ENCODE measurements at regions of chr14 and their contacts with region 1.

Region 1: DNA sequence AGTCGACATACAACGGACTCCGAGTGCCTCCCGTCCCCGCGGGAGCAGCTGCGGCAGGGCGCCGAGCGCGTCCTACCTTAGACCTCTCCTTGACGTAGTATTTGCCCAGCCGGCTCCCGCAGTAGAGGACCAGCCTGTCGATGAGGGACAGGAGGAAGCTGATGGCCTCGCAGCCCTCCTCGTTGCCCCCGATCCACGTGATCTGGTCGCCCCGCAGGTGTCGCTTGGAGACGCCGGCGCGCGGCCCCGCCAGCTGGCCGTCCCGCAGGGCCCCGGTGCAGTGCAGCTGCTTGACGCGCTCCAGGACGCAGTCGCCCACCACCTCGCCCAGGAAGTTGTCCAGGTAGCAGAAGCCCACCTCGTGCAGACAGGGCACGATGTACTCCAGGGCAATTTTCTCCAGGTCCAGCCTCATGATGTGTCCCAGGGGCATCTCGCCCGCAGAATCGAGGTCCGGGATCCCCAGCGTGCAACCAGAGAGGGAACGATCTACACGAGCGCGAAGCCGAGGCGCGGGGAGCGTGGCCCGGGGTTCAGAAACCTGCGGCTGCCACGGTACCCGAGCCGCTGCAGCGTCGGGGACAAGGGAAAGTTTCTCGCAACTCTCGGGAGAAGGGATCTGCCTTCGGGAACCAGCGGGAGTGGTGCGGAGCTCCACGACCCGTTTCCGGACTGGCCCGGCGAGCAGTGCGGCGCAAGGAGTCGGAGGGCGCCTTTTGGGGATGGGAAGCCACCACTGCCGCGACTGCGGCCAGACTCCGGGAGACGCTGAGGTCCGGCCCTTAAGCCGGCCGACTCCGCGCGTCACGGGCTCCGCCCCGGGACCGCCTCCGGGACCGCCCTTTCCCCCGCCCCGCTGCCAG is at the start of gene EGLN3:
- DNase-seq: peak; percentile 84 to 98 (median 95)

Region 2: GRCh38 chr14:33754265-33754664 is 196.3 kb before region 1 on chr14:
- intact Hi-C with region 1: no loop called
- DNase-seq: no peak

Region 3: DNA sequence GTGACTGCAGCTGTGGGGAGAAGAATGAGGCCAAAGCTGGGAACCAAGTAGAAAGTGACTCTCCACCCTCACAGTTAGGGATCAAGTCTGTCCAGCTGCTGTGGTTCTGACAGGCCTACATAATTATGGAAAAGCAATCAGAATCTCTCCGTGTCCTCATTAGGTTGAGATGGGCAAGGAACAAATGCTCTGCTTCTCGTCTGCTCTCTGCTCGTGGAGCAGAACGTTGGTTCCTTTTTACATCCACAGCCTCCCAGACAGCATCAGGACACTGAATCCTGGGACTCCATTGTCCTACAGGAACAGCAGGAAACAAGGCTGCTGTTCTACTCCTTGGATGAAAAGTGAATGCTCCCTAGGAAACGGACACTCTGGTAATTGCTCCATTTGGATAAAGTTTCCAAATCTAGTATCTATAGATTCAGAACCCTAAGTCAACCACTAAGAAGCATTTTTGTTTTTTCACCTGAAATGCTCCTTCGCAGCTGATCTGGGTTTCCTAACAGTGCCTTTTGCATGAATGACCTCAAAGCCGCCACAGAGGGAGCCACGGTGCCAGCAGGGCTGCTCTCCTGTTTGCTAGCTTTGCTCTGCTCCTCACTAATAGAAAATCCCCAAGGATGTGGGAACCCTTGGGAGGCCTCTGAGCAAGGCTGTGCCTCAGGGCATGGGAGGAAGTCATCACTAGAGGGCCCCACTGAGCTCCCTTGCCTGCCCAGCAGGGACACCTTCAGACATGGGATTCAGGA is 101.7 kb before region 1 on chr14:
- intact Hi-C with region 1: loop called (anchors 5 kb)
- DNase-seq: peak; percentile 46 to 91 (median 80)

Region 4: DNA sequence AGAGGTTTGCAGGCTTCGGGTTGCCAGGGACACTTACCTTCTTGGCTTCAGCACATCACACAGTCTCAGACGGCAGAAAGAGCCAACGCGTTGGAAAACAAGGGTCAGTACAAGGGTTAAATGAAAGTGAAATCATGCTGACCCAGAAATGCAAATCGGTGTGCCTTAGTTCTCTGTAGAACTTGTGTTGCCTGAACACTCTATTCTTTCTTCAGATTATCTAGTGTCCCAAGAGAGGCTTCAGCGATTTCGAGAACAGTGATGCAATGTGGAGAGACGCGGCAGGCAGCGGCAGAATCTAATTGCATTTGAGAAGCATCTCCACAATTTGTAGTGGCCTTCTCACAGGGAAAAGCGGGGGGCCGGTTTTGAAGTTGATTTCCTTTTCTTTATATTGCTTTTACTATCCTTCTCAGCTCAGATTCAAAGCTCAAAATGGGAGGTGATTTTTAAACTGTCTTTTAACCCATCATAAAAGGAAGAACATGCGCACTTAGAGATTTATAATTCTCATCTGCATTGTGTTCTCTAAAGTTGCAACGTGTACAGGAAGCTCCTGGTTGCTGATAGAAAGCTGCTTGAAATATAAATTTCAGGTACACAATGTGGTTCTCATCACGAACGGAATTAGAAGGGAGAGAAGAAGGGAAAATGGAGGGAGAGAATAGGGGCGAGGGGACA is 68.2 kb after region 1 on chr14:
- intact Hi-C with region 1: loop called (anchors 10 kb)
- DNase-seq: peak in 41 of 42 donors; percentile 8 to 72 (median 35)

Region 5: GRCh38 chr14:34098045-34098984 is 147.8 kb after region 1 on chr14:
- intact Hi-C with region 1: loop called (anchors 10 kb)
- DNase-seq: peak; percentile 13 to 82 (median 62)